Adrenal gland (tissue), 19 donors: ENCODE measurements at regions of chr3 and their contacts with region 1.

Region 1: DNA sequence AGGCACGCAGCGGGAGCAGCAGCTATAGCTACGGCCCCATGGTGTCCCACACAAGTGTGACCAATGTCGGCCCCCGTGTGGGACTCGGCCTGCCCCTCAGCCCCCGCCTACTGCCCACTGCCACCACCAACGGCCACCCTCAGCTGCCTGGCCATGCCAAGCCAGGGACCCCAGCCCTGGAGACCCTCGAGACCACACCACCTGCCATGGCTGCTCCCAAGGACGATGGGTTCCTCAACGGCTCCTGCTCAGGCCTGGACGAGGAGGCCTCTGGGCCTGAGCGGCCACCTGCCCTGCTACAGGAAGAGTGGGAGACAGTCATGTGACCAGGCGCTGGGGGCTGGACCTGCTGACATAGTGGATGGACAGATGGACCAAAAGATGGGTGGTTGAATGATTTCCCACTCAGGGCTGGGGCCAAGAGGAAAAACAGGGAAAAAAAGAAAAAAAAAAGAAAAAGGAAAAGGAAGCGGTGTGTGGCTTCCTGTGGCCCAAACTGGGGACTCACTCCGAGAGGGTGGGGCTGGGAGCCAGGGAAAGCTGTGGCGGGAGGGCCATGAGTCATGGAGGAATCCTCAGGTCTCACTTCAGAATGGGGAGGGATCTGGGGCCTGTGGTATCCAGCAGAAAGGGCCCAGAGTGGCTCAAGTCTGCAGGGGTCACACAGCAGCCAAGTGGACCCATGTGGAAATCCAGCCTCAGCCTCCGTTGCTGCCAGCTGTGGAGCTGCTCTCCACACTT is 26.0 kb downstream of the PTH1R start:
- DNase-seq: peak in 1 of 7 donors; percentile 19
- H3K4me3 ChIP-seq: no peak overlapping the region
- H3K27ac ChIP-seq: no peak overlapping the region
- H3K4me1 ChIP-seq: peaks cover 0 to 5% of the 10 kb centered on the region in 2 donors
- H3K27me3 ChIP-seq: peaks cover 2% of the 10 kb centered on the region
- CTCF ChIP-seq: no peak
- POLR2A ChIP-seq: no peak

Region 2: DNA sequence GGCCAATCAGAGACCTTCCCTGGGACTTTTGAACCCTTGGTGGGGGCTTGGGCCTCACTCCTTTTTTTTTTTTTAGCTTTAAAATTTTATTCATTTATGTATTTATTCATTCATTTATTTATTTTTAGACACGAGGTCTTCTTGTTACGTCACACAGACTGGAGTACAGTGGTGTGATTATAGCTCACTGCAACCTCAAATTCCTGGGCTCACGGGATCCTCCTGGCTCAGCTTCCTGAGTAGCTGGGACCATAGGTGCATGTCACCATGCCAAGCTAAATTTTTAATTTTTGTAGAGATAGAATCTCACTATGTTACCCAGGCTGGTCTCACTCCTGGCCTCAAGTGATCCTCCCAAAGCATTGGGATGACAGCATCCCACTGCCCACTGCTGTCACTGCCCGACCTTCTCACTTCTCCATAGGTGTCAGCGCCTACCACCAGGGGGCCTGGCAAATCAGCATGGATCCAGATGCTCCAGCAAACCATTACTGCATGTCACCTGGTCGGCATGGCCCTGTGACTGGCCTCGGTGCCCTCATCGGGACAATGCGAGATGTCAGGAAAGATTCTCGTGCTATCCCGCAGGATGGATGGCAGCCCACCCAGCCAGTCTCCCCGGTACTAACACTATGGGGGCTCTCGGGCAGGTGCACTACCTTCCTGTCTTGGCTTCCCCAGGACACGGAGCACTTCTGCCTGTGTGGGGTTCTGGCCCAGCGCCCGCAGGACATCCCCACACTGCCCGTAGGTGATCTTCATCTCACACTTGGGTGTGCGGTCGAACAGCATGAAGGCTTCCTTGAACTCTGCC is 43.3 kb before region 1 on chr3:
- intact Hi-C with region 1: loop called (anchors 5 kb)
- DNase-seq: peak in 4 of 7 donors; percentile 12 to 31 (median 14)
- H3K4me3 ChIP-seq: no peak overlapping the region
- H3K27ac ChIP-seq: no peak overlapping the region
- H3K4me1 ChIP-seq: peaks cover 0 to 5% of the 10 kb centered on the region in 2 donors
- H3K27me3 ChIP-seq: no peaks in the 10 kb centered on the region
- CTCF ChIP-seq: peak in 4 of 6 experiments; percentile 6 to 34 (median 14)
- POLR2A ChIP-seq: no peak